ENCODE measurements at regions of chr1 and their contacts with region 1.

Region 1: GRCh38 chr1:42913426-42914091 is 45.1 kb downstream of the SLC2A1 start:
- DNase-seq: peak; percentile 42
- ATAC-seq: peak; percentile 71 to 78

Region 2: DNA sequence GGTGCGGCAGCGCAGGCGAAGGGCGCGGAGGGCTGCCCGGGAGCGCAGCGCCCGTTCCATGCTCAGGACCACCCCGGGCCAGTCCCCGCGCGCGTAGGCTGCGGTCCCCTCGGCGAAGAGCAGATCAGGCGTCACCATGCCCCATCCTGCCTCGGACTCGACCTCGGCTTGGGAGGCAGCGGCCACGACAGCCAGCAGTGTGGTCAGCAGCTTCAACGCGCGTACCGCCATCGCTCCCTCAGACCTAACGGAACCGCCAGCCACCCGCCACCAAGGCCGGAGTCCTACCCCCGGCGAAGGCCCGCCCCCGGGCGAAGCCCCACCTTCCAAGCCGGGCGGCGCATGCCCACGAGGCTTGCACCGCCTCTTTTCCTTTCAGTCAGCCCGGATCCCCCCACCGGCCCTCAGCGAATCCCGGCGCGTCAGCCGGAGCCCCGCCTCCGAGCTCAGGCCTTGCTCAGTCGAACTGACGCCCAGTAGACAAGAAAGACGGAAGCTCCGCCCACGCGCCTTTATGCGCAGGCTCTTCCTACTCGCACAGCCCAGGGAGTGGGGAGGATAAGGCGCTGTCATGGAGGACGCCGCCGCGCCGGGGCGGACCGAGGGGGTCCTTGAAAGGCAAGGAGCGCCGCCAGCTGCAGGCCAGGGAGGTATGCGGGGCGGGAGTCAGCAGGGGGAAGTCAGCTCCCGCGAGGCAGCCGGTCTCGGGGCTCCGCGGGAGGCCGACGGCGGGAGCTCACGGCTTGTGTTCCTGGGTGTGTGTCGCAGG is 146.6 kb before region 1 on chr1 and contains the starts of genes C1orf50 and P3H1:
- intact Hi-C with region 1: no loop called
- DNase-seq: peak; percentile 100
- ATAC-seq: peak; percentile 95 to 96
- total RNA-seq, gene C1orf50: 5.1 to 7.7 TPM
- total RNA-seq, gene P3H1: 16.2 to 17.7 TPM

Region 3: DNA sequence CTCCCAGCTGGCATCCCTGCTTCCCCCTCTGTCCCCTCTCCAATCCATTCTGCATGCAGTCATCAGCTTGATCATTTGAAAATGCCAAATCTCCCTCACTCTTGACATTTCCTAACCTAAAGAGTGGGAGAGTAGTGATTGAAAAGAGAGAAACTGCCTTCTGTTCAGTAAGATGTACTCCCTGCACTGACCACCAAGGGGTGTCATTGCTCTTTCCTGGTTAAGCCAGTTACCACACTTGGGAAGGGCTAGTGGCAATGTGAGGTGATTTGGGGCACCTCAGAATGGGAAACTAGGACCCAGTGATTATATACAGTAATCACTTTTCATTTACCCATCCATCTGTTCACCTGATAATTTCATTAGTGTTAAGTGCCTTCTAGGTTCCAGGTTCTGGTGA is 135.7 kb before region 1 on chr1:
- intact Hi-C with region 1: loop called in 1 of 2 experiments (anchors 5 kb)
- DNase-seq: no peak
- ATAC-seq: peak; percentile 35 to 70

Region 4: DNA sequence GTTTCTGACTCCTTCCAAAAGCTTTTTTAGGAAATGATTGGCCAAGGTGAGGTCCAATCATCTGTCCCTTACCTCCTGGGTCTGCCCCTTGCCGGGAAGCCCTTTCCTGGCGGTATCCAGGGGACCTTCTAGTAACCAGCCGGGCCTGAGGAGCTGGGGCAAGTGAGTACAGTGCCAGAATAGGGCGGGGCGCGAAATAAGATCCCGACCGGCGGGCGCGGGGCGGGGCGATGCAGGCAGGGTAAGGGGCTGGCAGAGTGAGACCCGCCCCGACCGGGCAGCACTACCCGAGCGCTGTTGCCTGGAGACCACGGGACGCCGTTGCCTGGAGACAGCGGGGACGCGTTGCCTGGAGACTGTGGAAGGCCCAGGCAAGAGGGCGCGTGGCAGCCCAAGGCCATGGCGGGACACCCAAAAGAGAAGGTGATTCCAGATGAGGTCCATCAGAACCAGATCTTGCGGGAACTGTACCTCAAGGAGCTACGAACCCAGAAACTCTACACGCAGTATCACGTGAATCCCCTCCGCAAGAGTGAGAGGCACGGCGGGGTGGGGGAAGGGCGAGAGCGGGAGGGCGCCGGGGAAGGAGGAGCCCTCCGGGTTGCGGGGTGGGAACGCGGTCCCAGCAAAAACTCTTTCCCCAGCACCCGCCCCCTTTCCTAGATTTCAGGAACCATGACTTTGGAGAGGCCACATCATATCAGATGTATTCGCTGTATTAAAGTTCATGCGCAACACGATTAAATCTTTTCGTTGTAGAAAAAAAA is 234.2 kb after region 1 on chr1:
- intact Hi-C with region 1: no loop called
- DNase-seq: peak; percentile 80
- ATAC-seq: peak; percentile 93 to 95